ENCODE measurements at regions of chr21 and their contacts with region 1.

Region 1: GRCh38 chr21:24076179-24076578 is 1531.1 kb downstream of the MRPL39 start:
- DNase-seq: no peak
- ATAC-seq: no peak
- H3K4me3 ChIP-seq: no peak overlapping the region
- H3K27ac ChIP-seq: no peak overlapping the region
- H3K4me1 ChIP-seq: no peaks in the 10 kb centered on the region
- H3K27me3 ChIP-seq: no peaks in the 10 kb centered on the region
- CTCF ChIP-seq: peak in 2 of 9 donors; percentile 13 to 15

Region 2: GRCh38 chr21:23921670-23922418 is 154.3 kb before region 1 on chr21:
- intact Hi-C with region 1: no loop called
- DNase-seq: no peak
- ATAC-seq: no peak
- H3K4me3 ChIP-seq: no peak overlapping the region
- H3K27ac ChIP-seq: no peak overlapping the region
- H3K4me1 ChIP-seq: no peaks in the 10 kb centered on the region
- H3K27me3 ChIP-seq: no peaks in the 10 kb centered on the region
- CTCF ChIP-seq: no peak

Region 3: GRCh38 chr21:24123785-24124184 is 47.6 kb after region 1 on chr21:
- intact Hi-C with region 1: loop called in 1 of 10 experiments (anchors 2 kb)
- DNase-seq: no peak
- ATAC-seq: no peak
- H3K4me3 ChIP-seq: no peak overlapping the region
- H3K27ac ChIP-seq: no peak overlapping the region
- H3K4me1 ChIP-seq: no peaks in the 10 kb centered on the region
- H3K27me3 ChIP-seq: no peaks in the 10 kb centered on the region
- CTCF ChIP-seq: no peak